CD8-positive, alpha-beta T cell (primary cell): ENCODE measurements at regions of chr10 and their contacts with region 1.

Region 1: GRCh38 chr10:102503281-102504220 is at the start of gene SUFU:
- DNase-seq: peak; percentile 94 to 100 (median 98)
- ATAC-seq: peak; percentile 69
- H3K4me3 ChIP-seq: peak within 1 kb of the TSS; percentile 85 to 89
- H3K4me3 Mint-ChIP-seq: no peak within 1 kb of the TSS
- H3K27ac ChIP-seq: peak within 1 kb of the TSS; percentile 30 to 89
- H3K27ac Mint-ChIP-seq: peak within 1 kb of the TSS; percentile 88
- H3K4me1 ChIP-seq: peaks cover 28% of the 10 kb centered on the region
- H3K4me1 Mint-ChIP-seq: peaks cover 44% of the 10 kb centered on the region
- H3K27me3 ChIP-seq: no peaks in the 10 kb centered on the region
- H3K27me3 Mint-ChIP-seq: no peaks in the 10 kb centered on the region
- CTCF ChIP-seq: peak; percentile 75
- total RNA-seq, gene SUFU: 3.9 to 4.2 TPM

Region 2: DNA sequence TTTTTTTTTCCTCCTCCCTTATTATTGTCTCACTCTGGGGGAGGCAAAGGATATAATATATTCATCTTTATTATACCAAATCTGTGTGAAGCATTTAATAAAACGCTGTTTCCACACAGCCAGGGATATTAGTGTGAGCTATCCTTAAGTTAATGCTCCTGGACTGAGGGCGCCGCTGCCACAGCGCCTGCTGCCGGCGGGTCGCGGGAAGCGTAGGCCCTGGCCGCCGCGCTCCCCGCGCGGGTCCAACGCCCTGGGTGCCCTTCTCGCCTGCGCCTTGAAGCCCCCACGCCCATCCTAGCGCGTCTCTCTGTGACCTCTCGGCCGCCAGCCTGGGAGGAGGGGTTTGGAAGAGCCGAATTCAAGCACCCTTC is 1264.8 kb before region 1 on chr10:
- CTCF ChIA-PET with region 1: no interaction called
- POLR2A ChIA-PET with region 1: no interaction called
- intact Hi-C with region 1: no loop called
- DNase-seq: peak in 2 of 9 experiments; percentile 42 to 51
- ATAC-seq: peak; percentile 58
- H3K4me3 ChIP-seq: no peak overlapping the region
- H3K4me3 Mint-ChIP-seq: no peak overlapping the region
- H3K27ac ChIP-seq: no peak overlapping the region
- H3K27ac Mint-ChIP-seq: no peak overlapping the region
- H3K4me1 ChIP-seq: peaks cover 24% of the 10 kb centered on the region
- H3K4me1 Mint-ChIP-seq: peaks cover 18% of the 10 kb centered on the region
- H3K27me3 ChIP-seq: peaks cover 33 to 51% of the 10 kb centered on the region in 2 experiments
- H3K27me3 Mint-ChIP-seq: peaks cover 74% of the 10 kb centered on the region
- CTCF ChIP-seq: peak; percentile 64

Region 3: GRCh38 chr10:102064868-102065560 is 438.5 kb before region 1 on chr10 and contains the start of gene HPS6:
- CTCF ChIA-PET with region 1: no interaction called
- POLR2A ChIA-PET with region 1: no interaction called
- intact Hi-C with region 1: loop called (anchors 2 to 5 kb)
- DNase-seq: peak; percentile 69 to 94 (median 89)
- ATAC-seq: peak; percentile 98
- H3K4me3 ChIP-seq: peak within 1 kb of the TSS; percentile 57 to 97
- H3K4me3 Mint-ChIP-seq: peak within 1 kb of the TSS; percentile 87
- H3K27ac ChIP-seq: peak within 1 kb of the TSS; percentile 66 to 85
- H3K27ac Mint-ChIP-seq: peak within 1 kb of the TSS; percentile 93
- H3K4me1 ChIP-seq: peaks cover 21% of the 10 kb centered on the region
- H3K4me1 Mint-ChIP-seq: peaks cover 28% of the 10 kb centered on the region
- H3K27me3 ChIP-seq: no peaks in the 10 kb centered on the region
- H3K27me3 Mint-ChIP-seq: no peaks in the 10 kb centered on the region
- CTCF ChIP-seq: no peak
- total RNA-seq, gene HPS6: 17.5 to 18.1 TPM

Region 4: GRCh38 chr10:102225646-102226541 is 277.7 kb before region 1 on chr10 and contains the start of gene ELOVL3:
- CTCF ChIA-PET with region 1: interaction called, 4 read pairs
- POLR2A ChIA-PET with region 1: interaction called, 3 read pairs
- intact Hi-C with region 1: loop called in 1 of 2 experiments (anchors 1 kb)
- DNase-seq: peak; percentile 61 to 93 (median 82)
- ATAC-seq: peak; percentile 89
- H3K4me3 ChIP-seq: peak within 1 kb of the TSS; percentile 37 to 40
- H3K4me3 Mint-ChIP-seq: peak within 1 kb of the TSS; percentile 66
- H3K27ac ChIP-seq: no peak within 1 kb of the TSS
- H3K27ac Mint-ChIP-seq: peak within 1 kb of the TSS; percentile 60
- H3K4me1 ChIP-seq: peaks cover 19% of the 10 kb centered on the region
- H3K4me1 Mint-ChIP-seq: peaks cover 19% of the 10 kb centered on the region
- H3K27me3 ChIP-seq: peaks cover 11 to 14% of the 10 kb centered on the region in 2 experiments
- H3K27me3 Mint-ChIP-seq: peaks cover 47% of the 10 kb centered on the region
- CTCF ChIP-seq: no peak
- total RNA-seq, gene ELOVL3: not detected

Region 5: DNA sequence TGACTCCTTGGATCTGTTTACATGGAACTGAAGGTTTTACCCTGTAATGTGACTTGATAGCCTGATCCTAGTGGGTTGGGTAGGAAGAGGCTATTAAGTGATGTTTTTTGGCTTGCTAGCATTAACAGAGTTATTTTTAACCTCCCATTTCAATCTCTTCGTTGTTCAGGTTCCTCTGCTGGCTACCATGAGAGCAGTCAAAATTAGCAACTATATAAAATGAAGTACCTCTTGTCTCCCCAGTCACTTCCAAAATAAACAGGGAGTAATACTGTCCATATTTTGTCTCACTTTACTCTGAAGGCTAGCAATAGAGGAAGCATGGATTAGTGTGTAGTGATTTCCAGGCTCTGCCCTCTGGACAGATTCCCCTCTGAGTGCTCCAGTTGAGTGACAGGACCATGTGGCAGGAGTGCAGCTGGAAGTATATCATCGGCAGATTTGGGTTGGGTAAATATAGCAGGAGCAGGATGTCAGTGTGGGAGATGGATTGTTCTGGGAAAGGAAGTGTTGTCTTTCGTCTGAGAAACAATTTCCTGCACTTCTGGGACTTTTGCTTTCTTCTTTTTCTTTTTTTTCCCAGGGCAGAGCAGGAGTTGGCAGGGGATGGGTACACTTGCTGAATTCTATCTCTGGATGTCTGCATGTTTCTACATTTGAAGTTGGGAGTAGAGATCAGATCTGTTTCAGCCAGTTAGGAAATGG is 223.0 kb before region 1 on chr10:
- CTCF ChIA-PET with region 1: no interaction called
- POLR2A ChIA-PET with region 1: no interaction called
- intact Hi-C with region 1: no loop called
- DNase-seq: no peak
- ATAC-seq: no peak
- H3K4me3 ChIP-seq: no peak overlapping the region
- H3K4me3 Mint-ChIP-seq: peak overlapping the region; percentile 2
- H3K27ac ChIP-seq: no peak overlapping the region
- H3K27ac Mint-ChIP-seq: peak overlapping the region; percentile 56
- H3K4me1 ChIP-seq: peaks cover 23% of the 10 kb centered on the region
- H3K4me1 Mint-ChIP-seq: peaks cover 54% of the 10 kb centered on the region
- H3K27me3 ChIP-seq: no peaks in the 10 kb centered on the region
- H3K27me3 Mint-ChIP-seq: no peaks in the 10 kb centered on the region
- CTCF ChIP-seq: no peak

Region 6: DNA sequence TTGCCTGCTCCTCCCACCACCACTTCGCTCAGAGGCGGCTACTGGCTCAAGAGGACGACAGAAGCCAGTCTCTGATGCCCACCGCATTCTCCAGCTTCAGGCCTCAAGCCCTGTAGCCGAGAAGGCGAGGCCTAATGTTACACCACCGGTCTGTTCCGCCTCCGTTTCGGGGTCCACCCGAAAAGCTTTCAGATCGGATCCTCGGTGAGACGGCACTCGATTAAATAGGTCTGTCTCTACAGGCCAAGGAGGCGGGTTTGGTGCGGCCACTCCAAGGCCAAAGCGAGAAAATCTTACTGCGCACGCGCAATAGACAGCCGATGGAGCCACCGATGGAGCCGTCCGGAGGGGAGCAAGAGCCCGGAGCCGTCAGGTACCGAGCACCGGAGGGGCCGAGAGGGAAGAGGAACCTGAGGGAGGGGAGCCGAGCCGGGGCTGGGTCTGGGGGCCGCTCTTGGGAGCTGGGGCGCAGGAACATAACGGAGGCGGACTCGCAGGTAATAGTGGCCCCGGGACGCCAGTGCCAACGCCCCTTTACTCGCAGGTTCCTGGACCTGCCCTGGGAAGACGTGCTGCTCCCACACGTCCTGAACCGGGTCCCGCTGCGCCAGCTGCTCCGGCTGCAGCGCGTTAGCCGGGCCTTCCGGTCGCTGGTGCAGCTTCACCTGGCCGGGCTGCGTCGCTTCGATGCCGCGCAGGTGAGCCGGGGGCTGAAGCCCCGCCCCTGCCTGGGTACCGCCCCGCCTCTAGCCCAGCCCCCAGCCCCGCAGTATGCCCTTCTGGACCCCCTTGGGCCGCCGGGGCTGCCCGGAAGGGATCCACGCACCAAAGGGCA is 82.5 kb before region 1 on chr10 and contains the start of gene FBXL15:
- CTCF ChIA-PET with region 1: no interaction called
- POLR2A ChIA-PET with region 1: interaction called, 6 read pairs
- intact Hi-C with region 1: loop called (anchors 1 kb)
- DNase-seq: peak; percentile 86 to 98 (median 95)
- ATAC-seq: peak; percentile 70
- H3K4me3 ChIP-seq: peak within 1 kb of the TSS; percentile 75 to 81
- H3K4me3 Mint-ChIP-seq: peak within 1 kb of the TSS; percentile 95
- H3K27ac ChIP-seq: peak within 1 kb of the TSS; percentile 79 to 82
- H3K27ac Mint-ChIP-seq: peak within 1 kb of the TSS; percentile 91
- H3K4me1 ChIP-seq: peaks cover 36% of the 10 kb centered on the region
- H3K4me1 Mint-ChIP-seq: peaks cover 39% of the 10 kb centered on the region
- H3K27me3 ChIP-seq: peaks cover 6 to 17% of the 10 kb centered on the region in 2 experiments
- H3K27me3 Mint-ChIP-seq: peaks cover 15% of the 10 kb centered on the region
- CTCF ChIP-seq: no peak
- total RNA-seq, gene FBXL15: 7.0 to 7.9 TPM

Region 7: GRCh38 chr10:102476466-102477141 is 26.9 kb before region 1 on chr10:
- CTCF ChIA-PET with region 1: interaction called, 8 read pairs
- POLR2A ChIA-PET with region 1: no interaction called
- intact Hi-C with region 1: loop called in 1 of 2 experiments (anchors 2 kb)
- DNase-seq: peak in 5 of 9 experiments; percentile 13 to 60 (median 24)
- ATAC-seq: no peak
- H3K4me3 ChIP-seq: no peak overlapping the region
- H3K4me3 Mint-ChIP-seq: peak overlapping the region; percentile 29
- H3K27ac ChIP-seq: peak overlapping the region in 1 of 2 experiments; percentile 43
- H3K27ac Mint-ChIP-seq: peak overlapping the region; percentile 79
- H3K4me1 ChIP-seq: peaks cover 36% of the 10 kb centered on the region
- H3K4me1 Mint-ChIP-seq: peaks cover 43% of the 10 kb centered on the region
- H3K27me3 ChIP-seq: no peaks in the 10 kb centered on the region
- H3K27me3 Mint-ChIP-seq: no peaks in the 10 kb centered on the region
- CTCF ChIP-seq: no peak

Region 8: DNA sequence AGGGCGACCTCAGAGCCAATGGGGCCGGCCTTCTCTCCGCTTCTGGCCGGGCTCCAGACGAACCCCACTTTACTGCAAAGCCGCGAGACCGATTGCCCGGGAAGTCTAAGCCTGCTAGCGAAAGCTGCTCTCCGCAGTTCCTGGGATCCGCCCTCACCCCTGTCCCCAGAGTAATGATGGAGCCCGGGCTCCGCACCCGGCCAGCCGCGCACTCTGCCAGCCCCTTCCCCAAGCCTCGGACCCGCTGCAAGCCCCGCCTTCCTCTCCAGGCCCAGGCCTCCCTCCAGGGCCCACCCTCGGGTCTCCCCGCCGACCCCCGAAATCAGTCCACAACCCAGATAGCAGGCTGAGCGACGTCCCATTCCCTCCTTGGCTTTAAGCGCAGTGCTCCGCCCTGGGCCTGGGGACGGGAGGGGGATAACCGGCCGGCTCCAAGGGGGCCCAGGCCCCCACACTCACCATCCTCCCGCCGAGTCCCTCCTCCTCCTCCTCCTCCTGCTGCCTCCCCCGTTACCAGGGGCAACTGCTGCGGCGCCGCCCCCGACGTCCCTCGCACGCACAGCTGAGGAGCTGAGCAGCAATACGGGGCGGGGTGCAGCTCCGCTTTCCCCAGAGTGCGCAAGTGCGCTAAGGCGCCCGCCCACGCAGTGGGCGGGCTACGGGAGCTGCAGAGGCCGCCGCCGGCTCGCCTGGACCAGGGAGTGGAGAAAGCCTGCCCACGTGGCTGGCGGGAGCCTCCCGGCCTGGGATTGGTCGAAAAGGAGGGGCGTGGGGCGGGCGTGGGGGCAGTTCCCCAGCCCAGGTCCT is 210.5 kb after region 1 on chr10 and contains the start of gene ARL3:
- CTCF ChIA-PET with region 1: no interaction called
- POLR2A ChIA-PET with region 1: no interaction called
- intact Hi-C with region 1: loop called (anchors 1 kb)
- DNase-seq: peak; percentile 79 to 98 (median 94)
- ATAC-seq: peak; percentile 89
- H3K4me3 ChIP-seq: peak within 1 kb of the TSS; percentile 96 to 98
- H3K4me3 Mint-ChIP-seq: peak within 1 kb of the TSS; percentile 97
- H3K27ac ChIP-seq: peak within 1 kb of the TSS; percentile 84 to 91
- H3K27ac Mint-ChIP-seq: peak within 1 kb of the TSS; percentile 94
- H3K4me1 ChIP-seq: peaks cover 21% of the 10 kb centered on the region
- H3K4me1 Mint-ChIP-seq: peaks cover 59% of the 10 kb centered on the region
- H3K27me3 ChIP-seq: no peaks in the 10 kb centered on the region
- H3K27me3 Mint-ChIP-seq: no peaks in the 10 kb centered on the region
- CTCF ChIP-seq: peak; percentile 65
- total RNA-seq, gene ARL3: 0.49 to 0.75 TPM

Region 9: DNA sequence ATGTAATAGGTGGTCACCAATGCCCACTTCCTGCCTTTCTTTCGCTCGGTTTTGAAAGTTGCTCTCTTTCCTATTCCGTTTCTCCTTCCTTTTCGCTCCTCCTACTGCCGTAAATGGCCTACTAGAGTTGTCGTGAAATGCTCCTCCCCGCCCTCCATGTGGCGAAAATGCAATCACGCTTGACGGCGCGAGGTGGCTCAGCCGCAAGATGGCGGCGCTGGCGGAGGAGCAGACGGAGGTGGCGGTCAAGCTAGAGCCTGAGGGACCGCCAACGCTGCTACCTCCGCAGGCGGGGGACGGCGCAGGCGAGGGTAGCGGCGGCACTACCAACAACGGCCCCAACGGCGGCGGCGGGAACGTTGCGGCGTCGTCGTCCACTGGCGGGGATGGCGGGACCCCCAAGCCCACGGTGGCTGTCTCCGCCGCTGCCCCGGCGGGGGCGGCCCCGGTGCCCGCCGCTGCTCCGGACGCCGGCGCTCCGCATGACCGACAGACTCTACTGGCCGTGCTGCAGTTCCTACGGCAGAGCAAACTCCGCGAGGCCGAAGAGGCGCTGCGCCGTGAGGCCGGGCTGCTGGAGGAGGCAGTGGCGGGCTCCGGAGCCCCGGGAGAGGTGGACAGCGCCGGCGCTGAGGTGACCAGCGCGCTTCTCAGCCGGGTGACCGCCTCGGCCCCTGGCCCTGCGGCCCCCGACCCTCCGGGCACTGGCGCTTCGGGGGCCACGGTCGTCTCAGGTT is 864.4 kb after region 1 on chr10 and contains the start of gene TAF5:
- CTCF ChIA-PET with region 1: no interaction called
- POLR2A ChIA-PET with region 1: interaction called, 3 read pairs
- intact Hi-C with region 1: loop called (anchors 2 to 10 kb)
- DNase-seq: peak; percentile 77 to 97 (median 90)
- ATAC-seq: peak; percentile 66
- H3K4me3 ChIP-seq: peak within 1 kb of the TSS; percentile 57 to 93
- H3K4me3 Mint-ChIP-seq: peak within 1 kb of the TSS; percentile 91
- H3K27ac ChIP-seq: peak within 1 kb of the TSS; percentile 70 to 72
- H3K27ac Mint-ChIP-seq: peak within 1 kb of the TSS; percentile 91
- H3K4me1 ChIP-seq: peaks cover 12% of the 10 kb centered on the region
- H3K4me1 Mint-ChIP-seq: peaks cover 24% of the 10 kb centered on the region
- H3K27me3 ChIP-seq: no peaks in the 10 kb centered on the region
- H3K27me3 Mint-ChIP-seq: no peaks in the 10 kb centered on the region
- CTCF ChIP-seq: no peak
- total RNA-seq, gene TAF5: 3.2 to 4.0 TPM